Transverse colon (tissue), 4 donors: ENCODE measurements at regions of chr7 and their contacts with region 1.

Region 1: DNA sequence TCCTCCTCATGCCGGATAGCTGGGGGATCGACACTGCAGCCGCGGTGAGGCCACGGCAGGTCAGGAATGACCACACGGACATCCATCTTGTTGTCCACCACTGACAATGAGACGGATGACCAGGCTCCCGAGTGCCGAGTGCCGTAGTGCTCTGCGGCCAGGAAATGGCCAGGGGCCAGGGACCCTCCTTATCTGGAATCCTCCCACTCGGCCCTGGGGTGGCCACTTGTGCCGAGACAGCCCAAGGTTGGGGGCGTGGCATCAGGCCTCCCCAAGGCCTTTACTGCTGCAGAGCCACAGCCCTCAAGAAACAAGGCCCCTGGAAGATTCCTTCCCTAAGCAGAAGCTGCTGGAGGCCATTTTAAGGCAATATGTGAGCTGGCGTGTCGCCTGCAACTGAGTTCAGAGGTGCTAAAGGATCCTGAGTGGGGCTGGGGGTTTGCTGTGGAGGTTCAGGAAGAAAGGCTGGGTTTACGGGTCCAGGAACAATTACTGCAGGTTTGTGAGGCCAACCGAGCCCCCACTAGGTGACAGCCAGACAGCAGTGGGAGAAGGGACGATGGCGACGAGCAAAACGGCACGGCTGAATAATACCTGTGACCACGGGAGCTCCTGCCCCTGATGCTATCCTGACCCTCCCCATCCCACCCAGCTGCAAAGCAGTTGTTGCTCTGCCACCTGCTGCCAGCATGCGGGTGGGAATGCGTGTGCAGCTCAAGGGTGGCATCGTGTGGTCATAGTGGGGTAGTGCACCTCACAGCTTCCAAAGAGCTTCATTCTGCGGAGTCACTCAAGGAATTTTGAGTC is 31.6 kb upstream of the LEP start:
- DNase-seq: peak; percentile 62
- H3K4me3 ChIP-seq: no peak overlapping the region
- H3K27ac ChIP-seq: no peak overlapping the region
- H3K4me1 ChIP-seq: no peaks in the 10 kb centered on the region
- H3K27me3 ChIP-seq: peaks cover 44% of the 10 kb centered on the region
- CTCF ChIP-seq: peak; percentile 97 to 98 (median 97)
- EP300 ChIP-seq: no peak
- POLR2A ChIP-seq: no peak

Region 2: DNA sequence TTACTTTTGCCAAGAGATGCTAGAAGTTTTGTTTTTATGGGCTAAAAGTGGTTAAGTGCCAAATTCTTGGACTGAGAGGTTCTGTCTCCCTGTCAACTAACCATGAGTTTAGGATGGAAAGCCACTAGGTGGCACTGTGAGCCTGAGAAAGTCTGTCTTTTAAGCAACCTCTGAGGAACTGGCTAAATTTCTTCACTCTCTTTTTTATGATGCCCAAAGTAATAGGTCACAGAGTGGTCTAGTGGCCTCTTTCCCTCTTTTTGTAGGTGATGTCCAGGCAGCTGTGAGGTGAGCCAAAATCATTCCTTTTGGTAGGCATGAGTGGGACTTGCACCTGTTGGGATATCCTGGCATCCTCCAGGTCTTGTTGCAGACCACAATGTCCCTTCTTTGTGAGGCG is 500.6 kb before region 1 on chr7:
- in situ Hi-C with region 1: loop called (anchors 5 to 10 kb)
- intact Hi-C with region 1: loop called (anchors 5 kb)
- DNase-seq: peak; percentile 75
- H3K4me3 ChIP-seq: no peak overlapping the region
- H3K27ac ChIP-seq: no peak overlapping the region
- H3K4me1 ChIP-seq: peaks cover 0 to 3% (median 0%) of the 10 kb centered on the region in 4 donors
- H3K27me3 ChIP-seq: no peaks in the 10 kb centered on the region
- CTCF ChIP-seq: peak; percentile 68 to 79 (median 77)
- EP300 ChIP-seq: no peak
- POLR2A ChIP-seq: no peak

Region 3: GRCh38 chr7:127717502-127718339 is 491.7 kb before region 1 on chr7:
- in situ Hi-C with region 1: loop called in 3 of 4 experiments (anchors 5 to 10 kb)
- intact Hi-C with region 1: no loop called
- DNase-seq: no peak
- H3K4me3 ChIP-seq: no peak overlapping the region
- H3K27ac ChIP-seq: no peak overlapping the region
- H3K4me1 ChIP-seq: no peaks in the 10 kb centered on the region
- H3K27me3 ChIP-seq: no peaks in the 10 kb centered on the region
- CTCF ChIP-seq: no peak
- EP300 ChIP-seq: no peak
- POLR2A ChIP-seq: no peak

Region 4: DNA sequence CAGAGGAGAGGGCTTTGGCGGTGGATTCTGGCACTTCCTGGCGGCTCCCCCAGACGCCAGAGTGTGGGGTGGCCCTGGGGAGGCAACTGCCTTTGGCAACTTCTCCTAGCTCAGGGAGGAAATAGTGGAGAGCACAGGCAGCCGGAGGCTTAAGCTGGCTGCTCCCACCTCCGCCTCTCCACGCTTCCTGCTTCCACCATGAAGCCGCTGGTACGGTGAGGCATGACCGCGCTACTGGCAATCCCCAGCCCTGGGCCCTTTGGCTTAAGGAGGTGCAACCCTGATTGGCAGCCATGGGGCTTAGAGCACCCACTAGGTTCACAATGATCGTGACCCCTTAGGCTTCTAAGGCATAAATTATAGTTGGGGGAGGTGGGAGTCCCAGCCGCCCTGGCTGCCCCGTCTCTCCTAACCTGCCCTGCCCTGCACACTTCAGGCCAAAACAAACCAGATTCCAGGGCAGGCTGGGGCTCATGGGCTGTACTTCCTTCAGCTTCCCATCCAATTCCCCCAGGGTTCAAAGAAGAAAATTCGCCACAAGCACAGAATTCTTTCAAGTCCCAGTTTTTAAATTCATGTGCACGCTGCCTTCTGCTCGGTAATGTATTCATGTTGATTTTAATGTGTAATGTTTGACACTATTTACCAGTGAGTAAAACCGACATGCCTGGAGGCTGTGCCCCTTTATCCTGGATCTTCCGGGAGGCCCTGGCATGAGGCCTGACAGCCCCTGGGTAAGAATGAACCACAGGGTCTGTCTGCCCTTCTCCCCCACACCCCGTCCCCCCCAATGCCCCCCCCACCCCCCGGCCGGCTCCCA is 87.5 kb before region 1 on chr7:
- in situ Hi-C with region 1: no loop called
- intact Hi-C with region 1: no loop called
- DNase-seq: no peak
- H3K4me3 ChIP-seq: no peak overlapping the region
- H3K27ac ChIP-seq: no peak overlapping the region
- H3K4me1 ChIP-seq: no peaks in the 10 kb centered on the region
- H3K27me3 ChIP-seq: peaks cover 20% of the 10 kb centered on the region
- CTCF ChIP-seq: no peak
- EP300 ChIP-seq: no peak
- POLR2A ChIP-seq: no peak

Region 5: DNA sequence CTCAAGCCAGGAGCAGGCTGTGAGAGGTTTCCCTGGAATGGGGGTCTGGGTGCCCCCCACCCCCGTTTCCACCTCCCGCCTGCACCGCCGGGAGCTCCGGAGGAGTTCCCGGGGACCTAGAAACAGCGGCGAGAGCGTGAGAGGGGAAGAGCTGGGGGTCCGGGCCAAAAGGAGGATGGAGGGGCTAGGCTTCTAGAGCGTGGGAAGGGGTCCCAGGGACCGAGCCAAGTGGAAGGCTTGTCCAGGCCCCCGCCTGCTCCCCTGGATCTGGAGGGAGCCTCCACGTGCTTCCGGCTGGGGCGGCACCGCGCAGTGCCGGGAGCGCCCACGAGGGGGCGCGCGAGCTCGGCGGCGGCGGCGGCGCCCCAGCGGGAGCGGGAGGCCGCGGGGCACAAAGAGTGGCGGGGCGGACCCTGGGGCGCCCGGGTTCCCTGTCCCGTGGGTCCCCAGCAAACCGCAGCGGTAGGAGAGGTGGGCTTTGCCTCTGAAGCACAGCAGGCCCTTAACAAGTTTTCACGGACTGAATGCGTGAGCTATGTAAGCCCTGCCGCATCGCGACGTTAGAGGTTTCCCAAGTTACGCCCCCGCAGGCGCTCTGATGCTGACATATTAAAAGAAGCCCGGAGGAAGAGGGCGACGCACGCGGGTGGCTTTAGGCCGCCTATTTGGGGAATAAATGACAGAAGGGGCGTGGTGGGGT is 73.8 kb before region 1 on chr7:
- in situ Hi-C with region 1: loop called in 2 of 4 experiments (anchors 5 to 10 kb)
- intact Hi-C with region 1: loop called (anchors 5 kb)
- DNase-seq: peak; percentile 43
- H3K4me3 ChIP-seq: peak overlapping the region; percentile 35 to 67 (median 45)
- H3K27ac ChIP-seq: no peak overlapping the region
- H3K4me1 ChIP-seq: peaks cover 6 to 18% (median 15%) of the 10 kb centered on the region in 4 donors
- H3K27me3 ChIP-seq: peaks cover 94% of the 10 kb centered on the region
- CTCF ChIP-seq: peak; percentile 42 to 92 (median 86)
- EP300 ChIP-seq: no peak
- POLR2A ChIP-seq: no peak